Esophagus squamous epithelium (tissue), 5 donors: ENCODE measurements at regions of chr17 and their contacts with region 1.

Region 1: GRCh38 chr17:42517516-42517915 is 18.5 kb upstream of the NAGLU start:
- DNase-seq: no peak
- H3K4me3 ChIP-seq: no peak overlapping the region
- H3K27ac ChIP-seq: peak overlapping the region; percentile 79 to 97 (median 91)
- H3K4me1 ChIP-seq: peaks cover 36 to 79% (median 63%) of the 10 kb centered on the region in 3 donors
- H3K27me3 ChIP-seq: no peaks in the 10 kb centered on the region
- CTCF ChIP-seq: peak; percentile 91 to 97 (median 94)
- POLR2A ChIP-seq: peak in 1 of 4 donors; percentile 18

Region 2: GRCh38 chr17:42322382-42323267 is 194.9 kb before region 1 on chr17:
- intact Hi-C with region 1: loop called (anchors 5 kb)
- DNase-seq: peak; percentile 81
- H3K4me3 ChIP-seq: no peak overlapping the region
- H3K27ac ChIP-seq: peak overlapping the region in 3 of 4 donors; percentile 41 to 64 (median 58)
- H3K4me1 ChIP-seq: peaks cover 0 to 45% (median 5%) of the 10 kb centered on the region in 3 donors
- H3K27me3 ChIP-seq: no peaks in the 10 kb centered on the region
- CTCF ChIP-seq: peak; percentile 97 to 100 (median 100)
- POLR2A ChIP-seq: no peak

Region 3: DNA sequence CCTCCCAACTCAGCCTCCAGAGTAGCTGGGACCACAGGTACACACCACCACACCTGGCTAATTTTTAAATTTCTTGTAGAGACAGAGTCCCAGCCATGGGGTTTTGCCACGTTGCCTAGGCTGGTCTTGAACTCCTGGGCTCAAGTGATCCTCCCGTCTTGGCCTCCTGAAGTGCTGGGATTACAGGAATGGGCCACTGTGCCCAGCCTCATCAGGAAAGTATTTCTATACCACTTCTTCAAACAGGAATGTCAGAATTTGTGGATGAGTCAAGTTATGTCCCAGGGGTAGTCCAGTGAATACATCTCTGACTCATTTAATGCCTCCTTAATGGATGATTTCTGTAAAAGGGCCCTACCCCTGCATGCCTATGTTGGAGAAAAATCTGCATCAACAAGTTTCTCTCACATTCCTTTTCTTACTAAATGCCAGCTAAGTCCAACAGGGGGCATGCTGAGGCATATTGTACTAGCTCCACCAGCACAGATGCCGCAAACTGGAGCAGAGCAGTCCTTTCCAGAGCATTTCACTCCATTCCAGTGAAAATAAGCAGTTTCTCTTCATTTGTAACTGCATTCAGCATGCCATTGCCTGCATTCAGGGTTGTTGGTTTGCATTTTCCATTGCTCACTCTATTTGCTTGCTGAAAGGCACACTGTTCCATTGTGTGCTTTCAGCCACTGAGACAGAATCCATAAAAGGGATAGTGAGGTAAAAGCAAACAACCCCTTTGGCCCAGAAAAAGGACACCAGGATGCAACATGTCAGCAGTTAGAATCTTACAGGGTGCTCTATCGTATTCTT is 89.2 kb before region 1 on chr17:
- intact Hi-C with region 1: loop called (anchors 10 kb)
- DNase-seq: no peak
- H3K4me3 ChIP-seq: no peak overlapping the region
- H3K27ac ChIP-seq: peak overlapping the region; percentile 62 to 85 (median 80)
- H3K4me1 ChIP-seq: peaks cover 18 to 77% (median 28%) of the 10 kb centered on the region in 3 donors
- H3K27me3 ChIP-seq: peaks cover 0 to 4% (median 0%) of the 10 kb centered on the region in 4 donors
- CTCF ChIP-seq: peak in 5 of 6 experiments; percentile 51 to 87 (median 83)
- POLR2A ChIP-seq: no peak

Region 4: GRCh38 chr17:42475835-42476234 is 41.7 kb before region 1 on chr17:
- intact Hi-C with region 1: loop called (anchors 5 kb)
- DNase-seq: no peak
- H3K4me3 ChIP-seq: no peak overlapping the region
- H3K27ac ChIP-seq: peak overlapping the region in 3 of 4 donors; percentile 3 to 45 (median 32)
- H3K4me1 ChIP-seq: peaks cover 0 to 17% (median 0%) of the 10 kb centered on the region in 3 donors
- H3K27me3 ChIP-seq: no peaks in the 10 kb centered on the region
- CTCF ChIP-seq: no peak
- POLR2A ChIP-seq: no peak